ENCODE measurements at regions of chr11 and their contacts with region 1.

Region 1: GRCh38 chr11:8219257-8220021 is 44.2 kb downstream of the LMO1 start:
- DNase-seq: peak; percentile 70 to 79
- ATAC-seq: peak; percentile 87 to 97
- H3K4me3 ChIP-seq: no peak overlapping the region
- H3K27ac ChIP-seq: no peak overlapping the region
- H3K4me1 ChIP-seq: no peaks in the 10 kb centered on the region
- CTCF ChIP-seq: peak; percentile 67
- EP300 ChIP-seq: no peak
- POLR2A ChIP-seq: no peak
- RAD21 ChIP-seq: peak; percentile 46 to 55

Region 2: GRCh38 chr11:8192016-8192895 is 27.2 kb before region 1 on chr11:
- CTCF ChIA-PET with region 1: interaction called, 60 read pairs
- POLR2A ChIA-PET with region 1: no interaction called
- DNase-seq: peak; percentile 69 to 78
- ATAC-seq: peak; percentile 90 to 98
- H3K4me3 ChIP-seq: no peak overlapping the region
- H3K27ac ChIP-seq: no peak overlapping the region
- H3K4me1 ChIP-seq: no peaks in the 10 kb centered on the region
- CTCF ChIP-seq: peak; percentile 79
- EP300 ChIP-seq: no peak
- POLR2A ChIP-seq: no peak
- RAD21 ChIP-seq: peak; percentile 74 to 82

Region 3: DNA sequence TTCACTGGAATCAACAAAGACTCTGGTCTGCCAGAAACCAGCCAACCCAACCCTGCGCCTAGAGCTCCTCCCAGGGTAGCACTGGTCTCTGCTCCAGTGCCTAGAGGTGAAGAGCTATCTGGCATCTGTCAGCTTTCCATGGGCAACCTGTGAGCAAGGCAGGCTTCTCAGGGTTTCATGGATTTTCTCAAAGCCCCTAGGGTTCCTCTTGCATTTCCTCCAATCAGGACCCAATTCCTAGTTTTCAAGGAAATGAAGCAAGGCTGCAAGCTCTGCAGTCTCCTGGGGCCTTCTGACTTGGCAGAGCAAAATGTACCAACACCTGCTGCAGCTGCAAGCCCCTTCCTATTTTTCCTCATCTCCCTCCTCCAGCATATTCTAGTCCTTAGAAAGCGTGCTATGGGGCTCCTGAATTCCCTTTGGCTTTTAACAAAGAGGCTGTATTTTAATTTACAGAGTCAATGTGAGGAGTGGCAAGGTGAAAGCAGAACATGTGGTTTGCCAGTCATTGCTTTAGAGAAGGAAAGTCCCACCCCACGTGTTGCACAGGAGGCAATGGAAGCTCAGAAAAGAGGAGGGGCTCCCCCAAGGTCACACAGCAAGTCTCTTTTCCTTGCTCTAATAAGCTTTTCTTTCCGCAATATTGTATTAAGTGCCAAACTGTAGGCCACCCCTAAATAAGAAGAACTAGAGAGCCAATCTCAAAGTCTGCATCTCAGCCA is 17.6 kb before region 1 on chr11:
- CTCF ChIA-PET with region 1: interaction called, 60 read pairs
- POLR2A ChIA-PET with region 1: no interaction called
- DNase-seq: no peak
- ATAC-seq: no peak
- H3K4me3 ChIP-seq: no peak overlapping the region
- H3K27ac ChIP-seq: no peak overlapping the region
- H3K4me1 ChIP-seq: no peaks in the 10 kb centered on the region
- CTCF ChIP-seq: no peak
- EP300 ChIP-seq: no peak
- POLR2A ChIP-seq: no peak
- RAD21 ChIP-seq: no peak

Region 4: GRCh38 chr11:8209208-8209807 is 10.1 kb before region 1 on chr11:
- CTCF ChIA-PET with region 1: interaction called, 22 read pairs
- POLR2A ChIA-PET with region 1: no interaction called
- DNase-seq: no peak
- ATAC-seq: peak in 1 of 2 experiments; percentile 56; a peak in 3 of 6 replicates
- H3K4me3 ChIP-seq: no peak overlapping the region
- H3K27ac ChIP-seq: no peak overlapping the region
- H3K4me1 ChIP-seq: no peaks in the 10 kb centered on the region
- CTCF ChIP-seq: peak; percentile 25; the same call in 2 of the 3 replicates
- EP300 ChIP-seq: no peak
- POLR2A ChIP-seq: no peak
- RAD21 ChIP-seq: no peak

Region 5: GRCh38 chr11:8233691-8234424 is 14.4 kb after region 1 on chr11:
- CTCF ChIA-PET with region 1: interaction called, 24 read pairs
- POLR2A ChIA-PET with region 1: no interaction called
- DNase-seq: peak; percentile 51 to 78
- ATAC-seq: peak; percentile 87 to 88
- H3K4me3 ChIP-seq: peak overlapping the region; percentile 29; the same call in 2 of the 3 replicates
- H3K27ac ChIP-seq: peak overlapping the region; percentile 85 to 93
- H3K4me1 ChIP-seq: peaks cover 36% of the 10 kb centered on the region
- CTCF ChIP-seq: no peak
- EP300 ChIP-seq: no peak
- POLR2A ChIP-seq: no peak
- RAD21 ChIP-seq: no peak

Region 6: DNA sequence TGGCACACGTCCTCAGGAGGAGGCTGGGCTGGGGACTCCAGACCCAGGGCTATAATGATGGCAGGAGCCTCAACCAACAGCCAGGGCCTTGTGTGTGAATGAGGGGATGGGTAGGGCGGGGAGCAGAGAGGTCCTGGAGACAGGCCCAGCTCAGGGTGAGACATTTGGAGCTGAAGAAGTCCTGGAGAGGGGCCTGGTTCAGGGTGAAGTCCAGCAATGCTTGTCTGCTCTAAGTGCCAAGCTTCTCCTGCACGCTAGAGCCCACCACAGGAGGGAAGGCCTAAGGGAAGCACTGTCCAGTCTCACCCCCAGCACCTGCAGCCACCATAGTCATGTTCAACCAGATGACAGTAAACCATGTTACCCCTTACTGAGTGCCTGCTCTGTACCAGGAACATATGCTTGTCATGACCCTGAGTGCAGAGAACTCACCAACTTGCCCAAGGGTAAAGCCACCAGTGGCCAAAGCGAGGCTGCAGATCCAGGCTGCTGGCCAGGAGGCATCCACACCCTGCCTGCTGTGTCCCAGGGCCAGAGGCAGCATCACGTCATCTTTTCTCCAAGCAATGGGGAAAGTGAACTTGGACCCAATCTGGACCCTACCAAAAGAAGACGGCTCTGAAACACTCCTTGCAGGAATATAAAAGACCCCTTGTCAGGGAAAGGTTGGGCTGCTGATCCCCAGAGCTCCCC is 20.2 kb after region 1 on chr11:
- CTCF ChIA-PET with region 1: interaction called, 24 read pairs
- POLR2A ChIA-PET with region 1: no interaction called
- DNase-seq: no peak
- ATAC-seq: no peak
- H3K4me3 ChIP-seq: no peak overlapping the region
- H3K27ac ChIP-seq: no peak overlapping the region
- H3K4me1 ChIP-seq: peaks cover 6% of the 10 kb centered on the region
- CTCF ChIP-seq: no peak
- EP300 ChIP-seq: no peak
- POLR2A ChIP-seq: no peak
- RAD21 ChIP-seq: no peak

Region 7: GRCh38 chr11:8671193-8671612 is 451.8 kb after region 1 on chr11:
- CTCF ChIA-PET with region 1: no interaction called
- POLR2A ChIA-PET with region 1: no interaction called
- DNase-seq: peak in 1 of 2 experiments; percentile 48
- ATAC-seq: peak; percentile 90 to 96
- H3K4me3 ChIP-seq: no peak overlapping the region
- H3K27ac ChIP-seq: peak overlapping the region; percentile 54 to 74; a peak in 5 of 6 replicates
- H3K4me1 ChIP-seq: peaks cover 16% of the 10 kb centered on the region
- CTCF ChIP-seq: no peak
- EP300 ChIP-seq: no peak
- POLR2A ChIP-seq: no peak
- RAD21 ChIP-seq: no peak